ENCODE measurements at regions of chr4 and their contacts with region 1.

Region 1: GRCh38 chr4:154551872-154552686 is 1.9 kb upstream of the PLRG1 start:
- DNase-seq: peak; percentile 65 to 73
- ATAC-seq: peak; percentile 70 to 79 (median 72)
- H3K4me3 ChIP-seq: no peak overlapping the region
- H3K27ac ChIP-seq: no peak overlapping the region
- H3K4me1 ChIP-seq: peaks cover 9% of the 10 kb centered on the region
- H3K27me3 ChIP-seq: no peaks in the 10 kb centered on the region
- CTCF ChIP-seq: peak; percentile 90

Region 2: GRCh38 chr4:154622416-154622997 is 70.4 kb after region 1 on chr4:
- intact Hi-C with region 1: loop called in 1 of 2 experiments (anchors 5 kb)
- DNase-seq: no peak
- ATAC-seq: no peak
- H3K4me3 ChIP-seq: no peak overlapping the region
- H3K27ac ChIP-seq: no peak overlapping the region
- H3K4me1 ChIP-seq: peaks cover 4% of the 10 kb centered on the region
- H3K27me3 ChIP-seq: peaks cover 0 to 12% (median 0%) of the 10 kb centered on the region in 3 donors
- CTCF ChIP-seq: peak; percentile 32

Region 3: GRCh38 chr4:154779362-154779947 is 227.4 kb after region 1 on chr4:
- intact Hi-C with region 1: loop called in 1 of 2 experiments (anchors 2 kb)
- DNase-seq: no peak
- ATAC-seq: no peak
- H3K4me3 ChIP-seq: no peak overlapping the region
- H3K27ac ChIP-seq: no peak overlapping the region
- H3K4me1 ChIP-seq: no peaks in the 10 kb centered on the region
- H3K27me3 ChIP-seq: no peaks in the 10 kb centered on the region
- CTCF ChIP-seq: no peak

Region 4: DNA sequence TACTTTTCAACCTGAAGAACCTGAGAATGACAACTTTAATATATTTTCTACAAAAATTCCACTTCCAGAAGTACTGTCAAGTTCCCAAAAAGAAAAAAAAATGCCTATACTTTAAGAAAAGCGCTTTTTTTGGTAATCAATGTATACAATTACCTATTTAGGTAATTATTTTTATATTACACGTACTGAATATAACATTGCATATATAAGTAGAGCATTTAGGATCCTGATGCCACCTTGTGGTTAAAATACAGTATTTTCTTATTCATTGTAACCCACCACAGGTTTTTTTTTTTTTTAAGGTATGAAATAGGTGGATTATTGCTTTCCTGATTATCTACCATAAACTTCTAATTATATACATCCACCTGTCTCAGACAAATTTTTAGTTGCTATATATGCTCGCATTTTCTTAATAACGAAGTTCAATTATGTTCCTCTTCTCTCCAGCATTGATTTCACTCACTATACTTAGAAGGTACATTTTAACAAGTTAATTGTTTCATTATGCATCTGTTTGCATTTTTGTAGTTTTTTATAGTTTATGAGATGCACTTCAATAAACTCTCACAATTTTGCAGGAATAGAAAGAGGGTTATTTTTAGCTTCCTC is 819.5 kb after region 1 on chr4:
- intact Hi-C with region 1: loop called (anchors 2 to 5 kb)
- DNase-seq: no peak
- ATAC-seq: no peak
- H3K4me3 ChIP-seq: no peak overlapping the region
- H3K27ac ChIP-seq: no peak overlapping the region
- H3K4me1 ChIP-seq: no peaks in the 10 kb centered on the region
- H3K27me3 ChIP-seq: peaks cover 0 to 22% (median 1%) of the 10 kb centered on the region in 3 donors
- CTCF ChIP-seq: peak; percentile 36

Measured in psoas muscle (tissue), 8 donors.